ENCODE measurements at regions of chrX and their contacts with region 1.

Region 1: GRCh38 chrX:9885150-9885549 is 82.0 kb upstream of the CLDN34 start:
- DNase-seq: no peak
- ATAC-seq: peak; percentile 99
- H3K4me3 ChIP-seq: no peak overlapping the region
- H3K27ac ChIP-seq: no peak overlapping the region
- H3K4me1 ChIP-seq: no peaks in the 10 kb centered on the region
- H3K27me3 ChIP-seq: no peaks in the 10 kb centered on the region; a peak in 2 of 4 replicates
- CTCF ChIP-seq: peak; percentile 79 to 90 (median 85); a peak in 5 of 6 replicates
- EP300 ChIP-seq: no peak
- POLR2A ChIP-seq: no peak
- RAD21 ChIP-seq: peak; percentile 79

Region 2: GRCh38 chrX:9797384-9798355 is 87.5 kb before region 1 on chrX:
- CTCF ChIA-PET with region 1: no interaction called
- POLR2A ChIA-PET with region 1: no interaction called
- RAD21 ChIA-PET with region 1: no interaction called
- SMC1A ChIA-PET with region 1: no interaction called
- in situ Hi-C with region 1: no loop called
- intact Hi-C with region 1: no loop called
- DNase-seq: no peak
- ATAC-seq: no peak
- H3K4me3 ChIP-seq: no peak overlapping the region
- H3K27ac ChIP-seq: no peak overlapping the region
- H3K4me1 ChIP-seq: no peaks in the 10 kb centered on the region
- H3K27me3 ChIP-seq: no peaks in the 10 kb centered on the region
- CTCF ChIP-seq: no peak
- EP300 ChIP-seq: no peak
- POLR2A ChIP-seq: no peak
- RAD21 ChIP-seq: no peak

Region 3: GRCh38 chrX:9873952-9874351 is 11.2 kb before region 1 on chrX:
- CTCF ChIA-PET with region 1: interaction called, 14 read pairs
- POLR2A ChIA-PET with region 1: no interaction called
- RAD21 ChIA-PET with region 1: interaction called, 4 read pairs
- SMC1A ChIA-PET with region 1: no interaction called
- in situ Hi-C with region 1: no loop called
- intact Hi-C with region 1: no loop called
- DNase-seq: no peak
- ATAC-seq: peak; percentile 99
- H3K4me3 ChIP-seq: no peak overlapping the region
- H3K27ac ChIP-seq: no peak overlapping the region
- H3K4me1 ChIP-seq: no peaks in the 10 kb centered on the region
- H3K27me3 ChIP-seq: peaks cover 0 to 1% of the 10 kb centered on the region in 2 experiments; a peak in 1 of 4 replicates
- CTCF ChIP-seq: peak; percentile 68 to 77 (median 75)
- EP300 ChIP-seq: no peak
- POLR2A ChIP-seq: no peak
- RAD21 ChIP-seq: peak; percentile 59

Region 4: DNA sequence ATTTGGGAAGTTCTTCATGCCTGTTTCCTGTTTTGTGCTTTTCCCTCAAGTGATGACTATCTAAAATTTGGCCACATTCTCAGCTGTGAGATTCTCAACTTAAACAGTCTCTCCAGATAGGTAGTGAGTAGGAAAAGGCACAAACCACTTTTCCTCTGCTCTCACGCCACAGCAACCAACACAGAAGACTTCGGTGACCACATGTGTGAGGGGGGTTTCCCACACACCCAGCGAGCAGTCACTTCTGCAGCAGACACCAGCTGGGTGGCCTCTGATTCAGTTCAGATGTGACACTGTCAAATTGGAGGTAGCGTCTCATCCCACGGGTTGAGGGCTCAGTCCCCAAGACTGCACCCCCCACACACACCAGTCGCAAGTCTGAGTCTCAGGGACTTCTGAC is 56.9 kb after region 1 on chrX:
- CTCF ChIA-PET with region 1: no interaction called
- POLR2A ChIA-PET with region 1: no interaction called
- RAD21 ChIA-PET with region 1: no interaction called
- SMC1A ChIA-PET with region 1: interaction called, 3 read pairs
- in situ Hi-C with region 1: no loop called
- intact Hi-C with region 1: loop called (anchors 2 kb)
- DNase-seq: peak; percentile 69
- ATAC-seq: peak; percentile 84
- H3K4me3 ChIP-seq: no peak overlapping the region
- H3K27ac ChIP-seq: peak overlapping the region; percentile 29; the same call in 1 of the 2 replicates
- H3K4me1 ChIP-seq: peaks cover 3% of the 10 kb centered on the region; the same call in 1 of the 2 replicates
- H3K27me3 ChIP-seq: no peaks in the 10 kb centered on the region
- CTCF ChIP-seq: no peak
- EP300 ChIP-seq: peak; percentile 76 to 84; a peak in 3 of 4 replicates
- POLR2A ChIP-seq: no peak
- RAD21 ChIP-seq: no peak

Region 5: GRCh38 chrX:9966775-9967408 is 81.7 kb after region 1 on chrX and contains the start of gene CLDN34:
- CTCF ChIA-PET with region 1: interaction called, 5 read pairs
- POLR2A ChIA-PET with region 1: no interaction called
- RAD21 ChIA-PET with region 1: no interaction called
- SMC1A ChIA-PET with region 1: no interaction called
- in situ Hi-C with region 1: no loop called
- intact Hi-C with region 1: loop called (anchors 5 kb)
- DNase-seq: no peak
- ATAC-seq: no peak
- H3K4me3 ChIP-seq: no peak within 1 kb of the TSS
- H3K27ac ChIP-seq: no peak within 1 kb of the TSS
- H3K4me1 ChIP-seq: no peaks in the 10 kb centered on the region
- H3K27me3 ChIP-seq: no peaks in the 10 kb centered on the region
- CTCF ChIP-seq: no peak; a peak in 1 of 6 replicates
- EP300 ChIP-seq: no peak
- POLR2A ChIP-seq: no peak
- RAD21 ChIP-seq: peak; percentile 21; the same call in 1 of the 2 replicates
- polyA plus RNA-seq, gene CLDN34: not detected

Region 6: GRCh38 chrX:9988762-9989161 is 103.6 kb after region 1 on chrX:
- CTCF ChIA-PET with region 1: interaction called, 13 read pairs
- POLR2A ChIA-PET with region 1: no interaction called
- RAD21 ChIA-PET with region 1: interaction called, 5 read pairs
- SMC1A ChIA-PET with region 1: interaction called, 5 read pairs
- in situ Hi-C with region 1: loop called (anchors 5 kb)
- intact Hi-C with region 1: loop called (anchors 1 kb)
- DNase-seq: no peak
- ATAC-seq: peak; percentile 52
- H3K4me3 ChIP-seq: no peak overlapping the region
- H3K27ac ChIP-seq: no peak overlapping the region
- H3K4me1 ChIP-seq: no peaks in the 10 kb centered on the region
- H3K27me3 ChIP-seq: no peaks in the 10 kb centered on the region
- CTCF ChIP-seq: peak; percentile 43 to 71 (median 44); a peak in 4 of 6 replicates
- EP300 ChIP-seq: no peak
- POLR2A ChIP-seq: no peak
- RAD21 ChIP-seq: peak; percentile 69